Right cardiac atrium (tissue), 5 donors: ENCODE measurements at regions of chr4 and their contacts with region 1.

Region 1: GRCh38 chr4:168765726-168766125 is 244.3 kb downstream of the CBR4 start:
- DNase-seq: peak; percentile 66 to 88 (median 78)
- ATAC-seq: peak; percentile 80 to 93
- H3K4me3 ChIP-seq: no peak overlapping the region
- H3K27ac ChIP-seq: peak overlapping the region; percentile 43
- H3K4me1 ChIP-seq: peaks cover 24% of the 10 kb centered on the region
- H3K27me3 ChIP-seq: no peaks in the 10 kb centered on the region

Region 2: GRCh38 chr4:168815379-168816345 is 49.9 kb after region 1 on chr4:
- intact Hi-C with region 1: loop called in 1 of 4 experiments (anchors 10 kb)
- DNase-seq: no peak
- ATAC-seq: peak in 1 of 2 donors; percentile 34
- H3K4me3 ChIP-seq: no peak overlapping the region
- H3K27ac ChIP-seq: peak overlapping the region; percentile 86
- H3K4me1 ChIP-seq: peaks cover 7% of the 10 kb centered on the region
- H3K27me3 ChIP-seq: no peaks in the 10 kb centered on the region